ENCODE measurements at regions of chr12 and their contacts with region 1.

Region 1: GRCh38 chr12:22334410-22335290 is at the start of gene ST8SIA1:
- DNase-seq: peak; percentile 78
- H3K4me3 Mint-ChIP-seq: peak within 1 kb of the TSS; percentile 90
- H3K27ac Mint-ChIP-seq: peak within 1 kb of the TSS; percentile 89
- H3K4me1 Mint-ChIP-seq: peaks cover 49% of the 10 kb centered on the region
- H3K27me3 Mint-ChIP-seq: no peaks in the 10 kb centered on the region
- total RNA-seq, gene ST8SIA1: 9.5 to 9.6 TPM

Region 2: GRCh38 chr12:22083167-22083566 is 251.5 kb before region 1 on chr12:
- CTCF ChIA-PET with region 1: interaction called, 12 read pairs
- POLR2A ChIA-PET with region 1: no interaction called
- intact Hi-C with region 1: loop called (anchors 1 kb)
- DNase-seq: no peak
- H3K4me3 Mint-ChIP-seq: no peak overlapping the region
- H3K27ac Mint-ChIP-seq: no peak overlapping the region
- H3K4me1 Mint-ChIP-seq: no peaks in the 10 kb centered on the region
- H3K27me3 Mint-ChIP-seq: no peaks in the 10 kb centered on the region

Region 3: DNA sequence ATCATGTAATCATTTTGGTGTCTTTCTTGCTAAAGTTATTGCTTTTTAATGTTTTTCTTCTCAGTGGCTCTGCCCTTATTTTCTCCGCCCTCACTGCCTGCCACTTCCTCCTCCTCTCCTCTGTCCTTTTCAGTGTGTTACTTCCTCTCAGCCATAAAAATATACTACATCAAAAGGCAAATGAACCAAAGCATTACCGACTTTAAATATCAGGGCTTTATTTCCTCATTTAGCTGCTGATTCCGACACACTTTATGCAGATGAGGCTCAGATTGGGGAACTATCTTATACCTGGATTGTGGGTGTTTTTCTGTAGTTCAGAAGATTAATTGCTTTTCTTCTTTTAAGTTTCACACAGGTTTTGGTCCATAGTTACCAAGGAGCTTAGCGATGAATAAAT is 170.5 kb before region 1 on chr12:
- CTCF ChIA-PET with region 1: interaction called, 4 read pairs
- POLR2A ChIA-PET with region 1: no interaction called
- intact Hi-C with region 1: loop called (anchors 2 kb)
- DNase-seq: peak; percentile 18
- H3K4me3 Mint-ChIP-seq: peak overlapping the region; percentile 9
- H3K27ac Mint-ChIP-seq: peak overlapping the region; percentile 65
- H3K4me1 Mint-ChIP-seq: peaks cover 40% of the 10 kb centered on the region
- H3K27me3 Mint-ChIP-seq: no peaks in the 10 kb centered on the region

Region 4: DNA sequence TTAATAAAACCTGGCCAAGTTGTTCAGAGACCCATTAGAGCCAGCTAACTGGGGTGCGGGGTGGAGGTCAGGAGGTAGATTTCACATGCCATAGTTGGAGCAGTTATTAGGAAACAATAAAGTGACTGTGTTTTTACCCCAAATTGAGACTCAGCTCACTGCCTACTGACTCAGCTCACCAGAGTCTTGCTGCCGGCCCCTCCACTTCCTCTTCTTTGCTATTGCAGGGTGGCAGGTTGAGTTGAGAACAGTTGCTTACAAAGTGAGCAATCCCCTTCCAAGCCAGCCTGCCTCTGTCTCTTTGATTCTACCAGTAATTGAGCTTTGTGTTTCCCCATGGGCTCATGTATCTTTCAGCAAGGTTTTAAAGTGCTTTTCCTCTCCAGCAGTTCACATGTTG is 13.0 kb before region 1 on chr12:
- CTCF ChIA-PET with region 1: interaction called, 9 read pairs
- POLR2A ChIA-PET with region 1: interaction called, 5 read pairs
- intact Hi-C with region 1: loop called (anchors 1 kb)
- DNase-seq: peak; percentile 77
- H3K4me3 Mint-ChIP-seq: peak overlapping the region; percentile 45
- H3K27ac Mint-ChIP-seq: peak overlapping the region; percentile 81
- H3K4me1 Mint-ChIP-seq: peaks cover 55% of the 10 kb centered on the region
- H3K27me3 Mint-ChIP-seq: no peaks in the 10 kb centered on the region

Region 5: DNA sequence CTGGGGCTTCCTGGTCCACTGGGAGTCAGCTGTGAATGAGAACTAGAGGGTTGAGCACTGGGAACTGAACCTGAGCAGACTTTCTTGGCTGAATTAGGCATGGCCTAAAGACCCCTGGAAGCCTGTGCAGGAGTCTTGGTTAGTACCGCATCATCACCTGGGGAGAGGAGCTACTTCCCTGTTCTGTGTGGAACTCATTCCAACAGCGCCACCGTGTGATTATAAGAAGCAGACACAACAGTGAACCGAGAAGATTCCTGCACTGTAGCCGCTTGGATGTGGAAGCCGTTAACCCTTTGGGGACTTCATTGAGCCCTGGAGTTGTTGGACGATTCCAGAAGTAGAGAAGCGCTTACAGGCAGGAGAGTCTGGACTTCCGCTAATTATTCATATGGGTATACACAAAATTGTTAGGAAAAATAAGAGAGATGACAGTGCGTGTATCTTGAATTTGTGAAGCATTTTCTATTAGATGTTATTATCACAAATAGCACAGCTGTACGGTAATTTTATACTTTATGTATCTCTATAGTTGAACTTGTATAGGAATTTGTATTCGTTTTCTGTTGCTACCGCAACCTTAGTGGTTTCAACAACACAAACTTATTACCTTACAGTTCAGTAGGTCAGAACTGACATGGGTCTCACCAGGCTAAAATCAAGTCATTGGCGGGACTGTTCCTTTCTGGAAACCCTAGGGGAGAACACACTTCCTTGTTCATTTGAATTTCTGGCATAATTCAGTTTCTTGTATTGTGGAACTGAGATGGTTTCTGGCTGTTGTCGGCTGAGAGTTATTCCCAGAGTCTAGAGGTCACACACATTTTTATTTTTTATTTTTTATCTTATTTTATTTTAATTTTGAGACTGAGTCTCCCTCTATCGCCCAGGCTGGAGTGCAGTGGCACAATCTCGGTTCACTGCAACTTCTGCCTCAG is 109.0 kb after region 1 on chr12:
- CTCF ChIA-PET with region 1: interaction called, 22 read pairs
- POLR2A ChIA-PET with region 1: no interaction called
- intact Hi-C with region 1: loop called (anchors 1 kb)
- DNase-seq: peak; percentile 67
- H3K4me3 Mint-ChIP-seq: no peak overlapping the region
- H3K27ac Mint-ChIP-seq: no peak overlapping the region
- H3K4me1 Mint-ChIP-seq: peaks cover 4% of the 10 kb centered on the region
- H3K27me3 Mint-ChIP-seq: no peaks in the 10 kb centered on the region

Region 6: GRCh38 chr12:22505826-22506225 is 171.2 kb after region 1 on chr12:
- CTCF ChIA-PET with region 1: no interaction called
- POLR2A ChIA-PET with region 1: no interaction called
- intact Hi-C with region 1: no loop called
- DNase-seq: no peak
- H3K4me3 Mint-ChIP-seq: no peak overlapping the region
- H3K27ac Mint-ChIP-seq: no peak overlapping the region
- H3K4me1 Mint-ChIP-seq: no peaks in the 10 kb centered on the region
- H3K27me3 Mint-ChIP-seq: no peaks in the 10 kb centered on the region